ENCODE measurements at regions of chr3 and their contacts with region 1.

Region 1: GRCh38 chr3:66413151-66413751 is 87.6 kb downstream of the LRIG1 start:
- DNase-seq: no peak
- ATAC-seq: no peak
- H3K4me3 ChIP-seq: no peak overlapping the region
- H3K27ac ChIP-seq: no peak overlapping the region
- H3K4me1 ChIP-seq: peaks cover 4% of the 10 kb centered on the region
- H3K27me3 ChIP-seq: no peaks in the 10 kb centered on the region
- CTCF ChIP-seq: no peak

Region 2: GRCh38 chr3:66499881-66500575 is 86.8 kb after region 1 on chr3:
- intact Hi-C with region 1: loop called (anchors 10 kb)
- DNase-seq: peak; percentile 80
- ATAC-seq: peak; percentile 16
- H3K4me3 ChIP-seq: peak overlapping the region; percentile 83
- H3K27ac ChIP-seq: peak overlapping the region; percentile 90
- H3K4me1 ChIP-seq: peaks cover 41% of the 10 kb centered on the region
- H3K27me3 ChIP-seq: no peaks in the 10 kb centered on the region
- CTCF ChIP-seq: no peak

Region 3: GRCh38 chr3:66544619-66545429 is 131.6 kb after region 1 on chr3:
- intact Hi-C with region 1: no loop called
- DNase-seq: no peak
- ATAC-seq: no peak
- H3K4me3 ChIP-seq: no peak overlapping the region
- H3K27ac ChIP-seq: no peak overlapping the region
- H3K4me1 ChIP-seq: no peaks in the 10 kb centered on the region
- H3K27me3 ChIP-seq: no peaks in the 10 kb centered on the region
- CTCF ChIP-seq: no peak